CD4-positive, alpha-beta T cell (primary cell): ENCODE measurements at regions of chr3 and their contacts with region 1.

Region 1: GRCh38 chr3:154323891-154324738 is at the start of gene DHX36:
- DNase-seq: peak; percentile 77 to 95 (median 86)
- ATAC-seq: peak; percentile 89
- H3K4me3 ChIP-seq: peak within 1 kb of the TSS; percentile 84
- H3K4me3 Mint-ChIP-seq: peak within 1 kb of the TSS; percentile 96
- H3K27ac ChIP-seq: peak within 1 kb of the TSS; percentile 96 to 97
- H3K27ac Mint-ChIP-seq: peak within 1 kb of the TSS; percentile 99
- H3K4me1 ChIP-seq: peaks cover 39% of the 10 kb centered on the region
- H3K4me1 Mint-ChIP-seq: peaks cover 16% of the 10 kb centered on the region
- H3K27me3 ChIP-seq: no peaks in the 10 kb centered on the region
- H3K27me3 Mint-ChIP-seq: no peaks in the 10 kb centered on the region
- CTCF ChIP-seq: no peak
- total RNA-seq, gene DHX36: 128 TPM

Region 2: GRCh38 chr3:153628591-153628990 is 695.5 kb before region 1 on chr3:
- CTCF ChIA-PET with region 1: no interaction called
- POLR2A ChIA-PET with region 1: no interaction called
- intact Hi-C with region 1: loop called in 1 of 2 experiments (anchors 5 kb)
- DNase-seq: peak in 4 of 14 experiments; percentile 6 to 48 (median 26)
- ATAC-seq: no peak
- H3K4me3 ChIP-seq: no peak overlapping the region
- H3K4me3 Mint-ChIP-seq: peak overlapping the region; percentile 13
- H3K27ac ChIP-seq: no peak overlapping the region
- H3K27ac Mint-ChIP-seq: peak overlapping the region; percentile 34
- H3K4me1 ChIP-seq: peaks cover 11% of the 10 kb centered on the region
- H3K4me1 Mint-ChIP-seq: peaks cover 58% of the 10 kb centered on the region
- H3K27me3 ChIP-seq: no peaks in the 10 kb centered on the region
- H3K27me3 Mint-ChIP-seq: no peaks in the 10 kb centered on the region
- CTCF ChIP-seq: no peak

Region 3: DNA sequence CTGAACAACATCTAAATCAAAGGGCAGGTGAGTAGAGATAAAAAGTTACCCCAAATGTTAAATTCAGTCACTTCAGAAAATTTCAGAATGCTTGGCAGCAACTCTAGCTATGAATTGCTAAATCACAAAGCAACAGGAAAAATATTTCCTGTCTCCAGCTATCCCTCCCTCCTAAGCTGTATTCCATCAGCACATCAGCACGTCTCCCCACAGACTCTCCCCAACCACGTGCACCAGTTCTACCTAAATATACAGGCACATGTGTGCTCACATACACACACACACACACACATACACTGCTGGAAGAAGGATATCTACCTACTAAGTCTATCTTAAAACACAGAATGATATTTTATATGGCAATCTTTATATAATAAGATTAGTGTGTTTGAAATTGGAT is 380.0 kb before region 1 on chr3:
- CTCF ChIA-PET with region 1: no interaction called
- POLR2A ChIA-PET with region 1: no interaction called
- intact Hi-C with region 1: no loop called
- DNase-seq: no peak
- ATAC-seq: no peak
- H3K4me3 ChIP-seq: no peak overlapping the region
- H3K4me3 Mint-ChIP-seq: no peak overlapping the region
- H3K27ac ChIP-seq: no peak overlapping the region
- H3K27ac Mint-ChIP-seq: no peak overlapping the region
- H3K4me1 ChIP-seq: no peaks in the 10 kb centered on the region
- H3K4me1 Mint-ChIP-seq: no peaks in the 10 kb centered on the region
- H3K27me3 ChIP-seq: no peaks in the 10 kb centered on the region
- H3K27me3 Mint-ChIP-seq: peaks cover 8% of the 10 kb centered on the region
- CTCF ChIP-seq: no peak

Region 4: DNA sequence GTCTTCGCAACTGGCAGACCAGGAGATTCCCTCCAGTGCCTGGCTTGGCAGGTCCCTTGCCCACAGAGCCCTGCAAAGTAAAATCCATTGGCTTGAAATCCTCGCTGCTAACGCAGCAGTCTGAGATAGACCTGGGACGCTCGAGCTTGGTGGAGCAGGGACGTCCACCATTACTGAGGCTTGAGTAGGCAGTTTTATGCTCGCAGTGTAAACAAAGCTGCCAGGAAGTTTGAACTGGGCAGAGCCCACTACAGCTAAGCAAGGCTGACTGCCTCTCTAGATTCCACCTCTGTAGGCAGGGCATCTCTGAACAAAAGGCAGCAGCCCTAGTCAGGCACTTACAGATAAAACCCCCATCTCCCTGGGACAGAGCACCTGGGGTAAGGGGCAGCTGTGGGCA is 551.0 kb after region 1 on chr3:
- CTCF ChIA-PET with region 1: no interaction called
- POLR2A ChIA-PET with region 1: no interaction called
- intact Hi-C with region 1: no loop called
- DNase-seq: no peak
- ATAC-seq: no peak
- H3K4me3 ChIP-seq: no peak overlapping the region
- H3K4me3 Mint-ChIP-seq: no peak overlapping the region
- H3K27ac ChIP-seq: no peak overlapping the region
- H3K27ac Mint-ChIP-seq: no peak overlapping the region
- H3K4me1 ChIP-seq: no peaks in the 10 kb centered on the region
- H3K4me1 Mint-ChIP-seq: no peaks in the 10 kb centered on the region
- H3K27me3 ChIP-seq: no peaks in the 10 kb centered on the region
- H3K27me3 Mint-ChIP-seq: no peaks in the 10 kb centered on the region
- CTCF ChIP-seq: no peak

Region 5: DNA sequence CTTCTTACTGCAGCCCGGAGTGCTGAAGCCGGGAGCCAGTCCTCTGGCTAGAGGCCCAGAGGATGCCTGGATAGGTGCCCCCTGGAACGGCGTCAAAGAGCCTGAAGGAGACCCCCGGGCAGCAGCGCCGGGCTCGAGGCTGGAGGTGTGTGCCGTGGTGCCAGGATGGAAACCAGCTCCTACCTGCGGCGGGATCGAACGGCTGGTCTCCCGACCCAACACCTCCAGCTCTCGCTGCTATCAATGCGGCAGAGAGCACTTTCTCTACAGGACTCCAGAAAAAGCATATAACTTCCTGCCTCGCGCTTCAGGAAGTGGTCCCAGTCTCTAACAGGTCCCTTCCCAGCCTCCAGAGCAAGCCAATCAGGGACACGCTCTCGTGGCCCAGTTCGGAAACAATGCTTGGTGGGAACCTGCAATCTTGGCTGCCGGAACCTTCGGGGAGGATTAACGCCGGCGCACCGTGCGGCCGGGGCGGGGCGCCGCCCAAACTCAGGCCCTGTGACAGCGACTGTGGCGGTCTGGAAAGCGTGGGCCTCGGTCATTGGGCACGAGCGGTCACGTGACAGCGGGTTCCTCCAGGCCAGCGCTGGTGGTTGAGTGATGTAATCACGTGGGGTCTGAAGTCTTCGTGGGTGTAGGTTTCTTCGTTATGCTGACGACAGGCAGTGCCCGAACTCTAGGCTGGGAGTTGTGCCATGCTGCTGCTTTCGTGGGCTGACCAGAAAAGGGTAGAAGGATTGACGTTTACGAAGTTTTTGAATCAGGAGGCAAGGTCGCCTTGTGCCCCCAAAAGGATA is 1530.2 kb after region 1 on chr3 and contains the start of gene SLC33A1:
- CTCF ChIA-PET with region 1: no interaction called
- POLR2A ChIA-PET with region 1: no interaction called
- intact Hi-C with region 1: loop called (anchors 1 to 5 kb)
- DNase-seq: peak; percentile 96 to 100 (median 98)
- ATAC-seq: peak; percentile 90
- H3K4me3 ChIP-seq: peak within 1 kb of the TSS; percentile 93
- H3K4me3 Mint-ChIP-seq: peak within 1 kb of the TSS; percentile 97
- H3K27ac ChIP-seq: peak within 1 kb of the TSS; percentile 74 to 98
- H3K27ac Mint-ChIP-seq: peak within 1 kb of the TSS; percentile 98
- H3K4me1 ChIP-seq: peaks cover 52% of the 10 kb centered on the region
- H3K4me1 Mint-ChIP-seq: peaks cover 47% of the 10 kb centered on the region
- H3K27me3 ChIP-seq: no peaks in the 10 kb centered on the region
- H3K27me3 Mint-ChIP-seq: no peaks in the 10 kb centered on the region
- CTCF ChIP-seq: peak; percentile 2
- total RNA-seq, gene SLC33A1: 14.6 to 16.4 TPM